ENCODE measurements at regions of chr1 and their contacts with region 1.

Region 1: DNA sequence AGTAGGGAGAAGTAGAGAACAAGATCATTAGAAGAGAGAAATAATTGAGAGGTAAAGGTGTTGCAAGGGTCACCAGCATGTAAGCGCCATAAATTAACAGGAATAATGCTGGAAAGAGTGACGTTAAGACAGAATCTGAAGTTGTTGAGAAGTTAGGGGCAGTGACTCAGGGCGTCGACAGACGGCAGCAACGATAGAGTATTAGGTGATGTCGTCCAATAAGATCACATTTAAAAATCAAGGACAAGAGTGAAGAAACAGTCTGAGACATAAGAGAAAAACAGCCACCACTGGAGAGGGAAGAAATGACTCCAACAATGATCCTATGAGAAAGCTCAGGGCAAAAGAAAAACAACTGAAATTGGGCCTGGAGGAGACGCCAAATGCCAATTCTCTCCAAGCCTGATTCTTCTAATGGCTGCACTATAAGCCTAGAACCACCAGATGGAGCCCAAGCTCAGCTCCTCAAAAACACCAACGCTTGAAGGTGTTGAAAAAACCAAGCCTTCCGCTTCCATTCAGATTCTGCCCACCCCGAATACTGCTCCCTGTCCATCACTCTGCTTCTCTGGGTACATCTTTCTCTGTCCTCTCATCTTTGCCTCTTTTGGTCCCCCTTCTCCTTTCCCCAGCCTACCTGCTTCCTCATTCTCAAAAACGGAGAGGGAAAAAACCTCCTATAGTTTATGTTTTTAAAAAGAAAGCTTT is 70.0 kb downstream of the LUZP1 start:
- DNase-seq: peak; percentile 80

Region 2: DNA sequence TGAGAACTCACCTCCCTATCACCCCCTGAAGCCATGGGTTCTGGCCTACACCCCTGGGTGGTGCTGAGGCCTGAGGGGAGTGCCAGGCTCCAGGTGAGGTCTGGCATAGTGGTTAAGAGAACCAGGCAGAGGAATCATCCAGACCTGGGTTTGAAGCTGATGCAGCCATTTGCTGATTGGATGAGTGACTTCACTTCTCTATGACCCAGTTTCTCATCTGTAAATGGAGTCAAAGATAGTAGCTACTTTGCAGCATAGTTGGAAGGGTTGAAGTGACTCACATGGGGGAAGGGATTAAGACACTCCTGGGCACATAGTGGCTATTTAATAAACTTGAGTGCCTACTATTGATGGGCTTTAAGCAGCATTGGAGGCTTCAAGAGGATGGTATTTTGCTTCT is 825.0 kb before region 1 on chr1:
- in situ Hi-C with region 1: no loop called
- DNase-seq: no peak

Region 3: GRCh38 chr1:22976461-22977243 is 122.0 kb before region 1 on chr1:
- in situ Hi-C with region 1: loop called (anchors 10 kb)
- DNase-seq: peak; percentile 87

Region 4: DNA sequence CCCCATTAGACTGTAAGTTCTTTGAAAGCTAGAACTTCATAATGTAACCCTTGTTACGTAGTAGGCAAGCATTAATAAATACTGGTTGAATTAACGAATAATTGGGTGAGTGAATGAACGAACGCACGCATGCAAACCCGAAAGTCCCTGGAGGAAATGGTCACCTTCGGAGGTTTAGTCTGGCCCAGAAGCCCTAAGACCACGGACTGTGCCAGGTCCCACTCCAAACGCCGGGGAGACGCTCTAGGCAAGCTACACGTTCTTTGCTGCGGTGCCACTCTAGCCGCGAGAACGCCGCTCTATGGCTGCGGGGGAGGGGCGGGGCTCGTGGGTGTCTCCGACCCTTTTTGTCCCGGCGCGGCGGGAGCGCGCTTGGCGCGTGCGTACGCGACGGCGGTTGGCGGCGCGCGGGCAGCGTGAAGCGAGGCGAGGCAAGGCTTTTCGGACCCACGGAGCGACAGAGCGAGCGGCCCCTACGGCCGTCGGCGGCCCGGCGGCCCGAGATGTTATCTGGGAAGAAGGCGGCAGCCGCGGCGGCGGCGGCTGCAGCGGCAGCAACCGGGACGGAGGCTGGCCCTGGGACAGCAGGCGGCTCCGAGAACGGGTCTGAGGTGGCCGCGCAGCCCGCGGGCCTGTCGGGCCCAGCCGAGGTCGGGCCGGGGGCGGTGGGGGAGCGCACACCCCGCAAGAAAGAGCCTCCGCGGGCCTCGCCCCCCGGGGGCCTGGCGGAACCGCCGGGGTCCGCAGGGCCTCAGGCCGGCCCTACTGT is 79.3 kb before region 1 on chr1 and contains the start of gene KDM1A:
- in situ Hi-C with region 1: no loop called
- DNase-seq: peak; percentile 96

Region 5: GRCh38 chr1:23184212-23184934 is 85.8 kb after region 1 on chr1:
- in situ Hi-C with region 1: loop called (anchors 10 kb)
- DNase-seq: peak; percentile 76

Measured in KBM-7 (cell line).